HEK293 (cell line): ENCODE measurements at regions of chr3 and their contacts with region 1.

Region 1: DNA sequence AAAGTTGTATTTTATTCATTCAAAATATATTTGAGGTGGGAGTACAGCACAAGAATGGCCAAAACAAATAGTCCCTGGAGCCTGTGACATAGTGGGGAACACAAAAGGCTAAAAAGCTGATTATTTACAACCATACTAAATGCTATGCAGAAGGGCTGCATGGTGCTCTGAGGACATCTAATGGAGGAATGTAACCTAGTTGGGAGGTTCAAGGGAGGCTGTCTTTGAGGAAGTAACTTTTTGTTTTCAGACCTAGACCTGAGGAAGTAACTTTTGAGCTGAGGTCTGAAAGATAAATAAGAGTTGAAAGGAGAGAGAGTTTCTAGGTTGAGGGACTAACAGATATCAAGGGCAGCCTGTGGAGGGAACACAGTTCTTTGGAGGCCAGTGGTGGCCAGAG is 34.8 kb upstream of the RASA2 start:
- H3K4me3 ChIP-seq: no peak overlapping the region
- H3K27ac ChIP-seq: no peak overlapping the region
- H3K4me1 ChIP-seq: no peaks in the 10 kb centered on the region
- CTCF ChIP-seq: peak; percentile 54; the same call in 1 of the 2 replicates

Region 2: GRCh38 chr3:141303481-141304223 is 148.4 kb before region 1 on chr3:
- CTCF ChIA-PET with region 1: interaction called, 16 read pairs
- POLR2A ChIA-PET with region 1: no interaction called
- H3K4me3 ChIP-seq: no peak overlapping the region
- H3K27ac ChIP-seq: no peak overlapping the region
- H3K4me1 ChIP-seq: no peaks in the 10 kb centered on the region
- CTCF ChIP-seq: no peak

Region 3: GRCh38 chr3:141311496-141312353 is 140.3 kb before region 1 on chr3:
- CTCF ChIA-PET with region 1: interaction called, 23 read pairs
- POLR2A ChIA-PET with region 1: interaction called, 5 read pairs
- H3K4me3 ChIP-seq: peak overlapping the region; percentile 81
- H3K27ac ChIP-seq: no peak overlapping the region; the same call in 1 of the 2 replicates
- H3K4me1 ChIP-seq: no peaks in the 10 kb centered on the region
- CTCF ChIP-seq: peak; percentile 91

Region 4: DNA sequence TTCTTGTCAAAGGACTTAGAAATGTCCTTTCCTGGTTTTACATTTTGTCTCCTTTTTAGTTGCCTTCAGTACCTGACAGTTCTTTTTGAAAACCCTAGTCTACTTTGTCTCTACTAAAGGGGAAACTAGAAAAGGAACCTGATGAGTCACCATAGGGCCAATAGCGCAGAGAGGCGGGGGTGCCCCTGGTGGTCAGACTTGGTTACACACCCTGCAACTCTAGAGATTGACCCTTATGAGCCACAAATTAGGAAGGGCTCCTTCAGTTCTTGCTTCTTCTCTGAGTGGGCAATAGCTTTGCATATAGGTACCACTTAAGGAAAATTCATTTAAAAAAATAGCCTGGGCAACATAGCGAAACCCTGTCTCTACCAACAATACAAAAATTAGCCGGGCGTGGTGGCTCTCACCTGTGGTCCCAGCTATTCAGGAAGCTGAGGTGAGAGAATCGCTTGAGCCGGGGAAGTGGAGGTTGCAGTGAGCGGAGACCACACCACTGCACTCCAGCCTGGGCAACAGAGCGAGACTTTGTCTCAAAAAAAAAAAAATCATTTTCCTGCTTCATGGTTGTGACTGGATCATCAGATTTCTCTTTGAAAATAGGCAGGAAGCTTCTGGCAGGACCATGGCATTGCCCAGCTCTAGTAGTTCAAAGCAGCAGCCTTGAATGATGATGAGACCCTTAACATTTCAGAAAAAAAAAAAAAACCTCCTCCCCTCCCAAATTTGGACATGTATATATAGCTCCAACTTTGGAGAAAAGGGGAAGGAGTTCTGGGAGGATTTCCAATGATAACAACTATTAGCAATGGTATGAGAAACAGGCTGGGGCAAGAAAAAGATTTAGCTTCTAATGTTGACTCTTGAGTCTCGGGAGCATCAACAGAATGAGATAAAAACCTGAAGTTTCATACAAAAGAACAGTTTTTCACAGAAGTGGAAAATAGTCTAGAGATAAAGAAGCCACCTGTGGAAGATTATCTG is 10.4 kb before region 1 on chr3:
- CTCF ChIA-PET with region 1: interaction called, 48 read pairs
- POLR2A ChIA-PET with region 1: no interaction called
- H3K4me3 ChIP-seq: no peak overlapping the region
- H3K27ac ChIP-seq: no peak overlapping the region
- H3K4me1 ChIP-seq: no peaks in the 10 kb centered on the region
- CTCF ChIP-seq: no peak

Region 5: GRCh38 chr3:141561426-141562034 is 109.5 kb after region 1 on chr3:
- CTCF ChIA-PET with region 1: interaction called, 30 read pairs
- POLR2A ChIA-PET with region 1: no interaction called
- H3K4me3 ChIP-seq: no peak overlapping the region
- H3K27ac ChIP-seq: no peak overlapping the region
- H3K4me1 ChIP-seq: peaks cover 3% of the 10 kb centered on the region; the same call in 1 of the 2 replicates
- CTCF ChIP-seq: 0 out of 2 replicates have a peak, but pooled peaks have one; percentile 24